GM13977 (cell line): ENCODE measurements at regions of chr2 and their contacts with region 1.

Region 1: DNA sequence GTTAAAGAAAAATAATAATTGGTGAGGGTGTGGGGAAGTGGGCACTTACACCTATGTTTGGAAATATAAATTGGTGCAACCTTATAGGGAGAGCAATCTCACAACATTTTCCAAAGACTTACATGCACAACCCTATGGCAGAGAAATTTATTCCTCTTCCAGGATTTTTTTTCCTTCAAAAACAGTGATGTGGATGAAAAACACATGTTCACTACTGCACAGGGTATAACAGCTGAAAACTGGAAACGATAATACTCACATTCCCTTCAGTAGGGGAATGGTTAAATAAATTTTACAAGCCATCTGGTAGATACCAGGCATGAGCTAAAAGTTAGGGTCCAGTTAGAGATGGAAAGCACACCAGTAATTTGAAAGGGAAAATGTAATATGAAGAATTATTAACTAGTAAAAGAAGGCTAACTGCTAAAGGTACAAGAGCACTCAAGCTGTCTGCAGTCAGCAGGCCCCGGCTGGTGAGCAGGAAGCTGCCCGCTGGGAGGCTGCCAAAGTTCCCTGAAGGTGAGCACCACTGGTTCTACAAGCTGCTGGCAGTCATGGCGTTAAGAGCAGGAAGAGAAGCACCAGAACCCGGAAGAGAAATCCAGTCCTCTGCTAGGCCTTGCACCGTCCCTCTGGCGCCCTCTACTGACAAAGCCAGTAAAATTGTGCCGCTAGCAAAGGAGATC is 28.4 kb upstream of the CASP8 start:
- DNase-seq: peak; percentile 83
- CTCF ChIP-seq: peak; percentile 91

Region 2: GRCh38 chr2:200944467-200945394 is 287.2 kb before region 1 on chr2:
- in situ Hi-C with region 1: no loop called
- DNase-seq: no peak
- CTCF ChIP-seq: no peak

Region 3: DNA sequence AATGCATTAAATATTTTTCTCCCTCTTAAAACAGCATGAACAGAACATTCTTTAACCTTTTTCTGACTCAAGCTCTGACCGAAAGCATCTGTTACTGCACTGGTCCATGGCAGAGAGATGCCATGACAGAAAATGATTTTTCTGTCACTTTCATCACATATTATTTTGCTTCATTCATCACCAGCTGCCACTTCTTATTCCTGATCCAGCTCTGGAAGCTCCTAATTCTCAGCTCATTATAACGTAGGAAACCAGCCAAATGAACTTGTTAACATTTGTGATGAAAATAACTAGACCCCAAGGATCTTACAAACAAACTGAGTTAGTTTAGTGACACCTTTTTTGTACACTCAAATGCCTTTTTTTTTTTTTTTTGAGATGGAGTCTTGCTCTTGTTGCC is 123.6 kb before region 1 on chr2:
- in situ Hi-C with region 1: no loop called
- DNase-seq: no peak
- CTCF ChIP-seq: no peak

Region 4: GRCh38 chr2:201118121-201118960 is 113.6 kb before region 1 on chr2:
- in situ Hi-C with region 1: no loop called
- DNase-seq: peak; percentile 74
- CTCF ChIP-seq: peak; percentile 45

Region 5: GRCh38 chr2:201363857-201364560 is 132.1 kb after region 1 on chr2:
- in situ Hi-C with region 1: loop called (anchors 10 kb)
- DNase-seq: peak; percentile 43
- CTCF ChIP-seq: peak; percentile 87